ENCODE measurements at regions of chr3 and their contacts with region 1.

Region 1: DNA sequence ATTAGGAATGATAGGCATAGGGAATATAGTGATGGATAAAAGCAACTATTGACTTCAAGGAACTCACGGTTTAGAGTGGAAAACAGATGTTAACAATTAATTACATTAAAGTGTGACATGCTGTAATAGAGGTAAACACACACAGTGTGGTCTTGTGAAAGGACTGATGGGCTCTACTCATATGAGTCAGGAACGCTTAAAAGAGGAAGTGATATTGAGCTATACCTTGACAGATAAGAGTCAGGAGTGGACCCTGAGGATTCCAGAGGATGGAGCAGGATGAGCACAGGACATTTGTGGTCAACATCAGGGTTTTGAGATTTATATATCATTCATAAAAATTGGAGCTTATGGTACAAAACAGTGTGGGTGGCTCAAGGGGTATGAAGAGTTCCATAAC is 11.0 kb downstream of the EXOG start:
- DNase-seq: no peak
- H3K4me3 ChIP-seq: no peak overlapping the region
- H3K27ac ChIP-seq: no peak overlapping the region
- H3K4me1 ChIP-seq: no peaks in the 10 kb centered on the region
- H3K27me3 ChIP-seq: no peaks in the 10 kb centered on the region
- CTCF ChIP-seq: no peak

Region 2: GRCh38 chr3:38669668-38670067 is 162.5 kb after region 1 on chr3:
- CTCF ChIA-PET with region 1: no interaction called
- dilution Hi-C with region 1: loop called (anchors 5 kb)
- in situ Hi-C with region 1: no loop called
- intact Hi-C with region 1: no loop called
- DNase-seq: no peak
- H3K4me3 ChIP-seq: no peak overlapping the region
- H3K27ac ChIP-seq: no peak overlapping the region
- H3K4me1 ChIP-seq: no peaks in the 10 kb centered on the region
- H3K27me3 ChIP-seq: no peaks in the 10 kb centered on the region
- CTCF ChIP-seq: no peak

Measured in mammary epithelial cell (primary cell).